Uterus (tissue), 4 donors: ENCODE measurements at regions of chr12 and their contacts with region 1.

Region 1: DNA sequence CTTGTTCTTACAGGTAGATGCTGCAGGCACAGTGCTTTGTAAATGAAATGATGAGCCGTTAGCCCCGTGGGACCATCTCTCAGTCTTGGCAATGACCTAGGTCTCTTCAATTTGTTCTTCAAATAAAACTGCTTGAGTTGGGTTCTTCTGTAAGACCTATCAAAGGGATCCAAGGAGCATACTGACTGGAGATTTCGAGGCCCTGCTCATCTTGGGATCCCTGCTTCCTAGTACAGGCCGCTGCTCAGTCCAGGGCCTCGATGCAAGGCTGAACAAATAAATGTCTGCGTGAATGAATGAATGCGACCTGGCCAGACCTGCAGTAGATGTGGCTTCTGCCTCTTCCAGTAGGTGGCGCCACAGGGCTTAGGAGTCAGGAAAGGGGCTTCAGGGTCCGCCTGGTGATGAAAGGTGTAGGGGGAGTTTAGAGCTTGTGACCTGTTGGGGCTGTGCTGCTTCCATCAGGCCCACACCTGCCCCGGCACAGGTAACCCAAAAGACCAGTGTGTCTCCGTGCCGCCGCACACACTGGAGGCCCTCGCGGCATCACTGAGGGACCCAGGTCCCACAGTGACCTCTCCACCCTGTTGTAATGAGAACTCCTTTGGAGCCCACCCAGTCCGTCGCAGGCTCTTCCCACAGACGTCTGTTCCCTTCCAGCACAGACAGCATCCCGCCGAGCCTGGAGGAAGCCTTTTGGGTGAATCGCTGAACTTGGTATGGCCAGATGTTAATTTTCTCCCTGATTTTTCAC is 4.4 kb downstream of the CACNA1C start:
- DNase-seq: peak; percentile 64 to 77
- H3K4me3 ChIP-seq: no peak overlapping the region
- H3K27ac ChIP-seq: peak overlapping the region; percentile 57 to 97
- H3K4me1 ChIP-seq: peaks cover 3 to 5% of the 10 kb centered on the region in 2 donors
- H3K27me3 ChIP-seq: no peaks in the 10 kb centered on the region
- CTCF ChIP-seq: peak; percentile 64 to 71 (median 66)
- POLR2A ChIP-seq: no peak

Region 2: DNA sequence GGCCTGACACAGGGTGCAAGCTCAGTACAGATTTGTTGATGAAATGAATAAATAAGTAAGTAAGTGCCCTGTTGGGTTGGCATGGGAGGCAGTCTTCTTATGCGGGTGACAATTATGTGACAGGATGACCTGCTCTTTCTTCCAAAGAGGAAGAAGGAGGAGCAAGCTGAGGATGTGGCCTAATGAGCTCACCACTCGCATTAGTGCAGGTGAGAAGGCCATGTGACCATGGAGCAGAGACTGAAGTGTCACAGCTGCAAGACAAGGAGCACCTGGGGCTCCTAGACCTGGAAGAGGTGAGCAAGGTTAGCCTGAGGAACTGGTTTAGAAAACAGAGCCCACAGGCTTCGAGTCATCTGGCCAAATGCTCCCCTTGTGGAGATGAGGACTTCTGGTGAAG is 202.0 kb before region 1 on chr12:
- intact Hi-C with region 1: no loop called
- DNase-seq: no peak
- H3K4me3 ChIP-seq: no peak overlapping the region
- H3K27ac ChIP-seq: no peak overlapping the region
- H3K4me1 ChIP-seq: no peaks in the 10 kb centered on the region
- H3K27me3 ChIP-seq: no peaks in the 10 kb centered on the region
- CTCF ChIP-seq: no peak
- POLR2A ChIP-seq: no peak

Region 3: GRCh38 chr12:2118061-2118460 is 60.8 kb after region 1 on chr12:
- intact Hi-C with region 1: no loop called
- DNase-seq: peak in 1 of 2 donors; percentile 10
- H3K4me3 ChIP-seq: no peak overlapping the region
- H3K27ac ChIP-seq: peak overlapping the region; percentile 52 to 82
- H3K4me1 ChIP-seq: peaks cover 0 to 11% of the 10 kb centered on the region in 2 donors
- H3K27me3 ChIP-seq: no peaks in the 10 kb centered on the region
- CTCF ChIP-seq: no peak
- POLR2A ChIP-seq: no peak

Region 4: DNA sequence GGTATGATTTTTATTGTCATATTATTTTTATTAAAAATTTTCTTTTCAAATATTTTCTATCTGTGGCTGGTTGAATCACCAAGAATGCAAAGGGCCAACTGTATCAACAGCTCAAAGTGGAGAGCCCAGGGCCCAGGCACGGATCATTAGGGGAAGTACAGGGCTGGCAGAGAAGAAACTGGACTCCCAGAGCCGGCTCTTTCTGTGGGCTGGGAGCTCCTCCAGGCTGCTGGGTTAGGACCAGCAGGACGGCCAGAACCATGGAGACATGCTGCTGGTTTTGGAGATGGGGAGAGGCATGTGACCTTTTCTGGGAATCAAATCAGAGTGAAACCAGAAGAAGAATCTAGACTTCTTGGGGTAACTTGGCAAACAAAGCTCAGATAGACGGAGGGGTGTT is 216.1 kb after region 1 on chr12:
- intact Hi-C with region 1: loop called (anchors 10 kb)
- DNase-seq: peak in 1 of 2 donors; percentile 63
- H3K4me3 ChIP-seq: no peak overlapping the region
- H3K27ac ChIP-seq: peak overlapping the region in 1 of 2 donors; percentile 10
- H3K4me1 ChIP-seq: peaks cover 0 to 10% of the 10 kb centered on the region in 2 donors
- H3K27me3 ChIP-seq: no peaks in the 10 kb centered on the region
- CTCF ChIP-seq: peak in 3 of 4 experiments; percentile 27 to 43 (median 39)
- POLR2A ChIP-seq: no peak

Region 5: DNA sequence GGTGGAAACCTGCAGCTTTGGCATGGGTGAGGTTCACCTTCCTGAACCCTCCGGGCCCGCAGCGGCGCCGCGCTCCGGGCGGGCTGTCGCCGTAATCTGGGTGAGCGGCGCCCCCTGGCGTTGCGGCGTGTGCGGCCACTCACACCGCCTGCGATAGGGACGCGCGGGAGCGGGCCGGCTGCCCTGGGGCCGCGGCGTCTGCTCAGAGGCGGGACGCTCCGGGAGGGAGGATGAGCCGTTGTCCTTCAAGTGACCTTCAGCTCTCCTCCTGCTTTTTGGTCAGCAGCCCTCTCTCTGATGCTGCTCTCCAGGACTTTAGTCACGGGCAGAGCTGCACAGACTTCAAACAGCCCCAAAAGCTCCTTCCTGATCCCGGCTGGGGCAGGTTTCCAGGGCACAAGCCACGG is 525.9 kb after region 1 on chr12:
- intact Hi-C with region 1: loop called (anchors 10 kb)
- DNase-seq: peak; percentile 56 to 77
- H3K4me3 ChIP-seq: no peak overlapping the region
- H3K27ac ChIP-seq: peak overlapping the region; percentile 35 to 52
- H3K4me1 ChIP-seq: peaks cover 0 to 7% of the 10 kb centered on the region in 2 donors
- H3K27me3 ChIP-seq: no peaks in the 10 kb centered on the region
- CTCF ChIP-seq: peak; percentile 76 to 97 (median 95)
- POLR2A ChIP-seq: no peak